ENCODE measurements at regions of chr14 and their contacts with region 1.

Region 1: DNA sequence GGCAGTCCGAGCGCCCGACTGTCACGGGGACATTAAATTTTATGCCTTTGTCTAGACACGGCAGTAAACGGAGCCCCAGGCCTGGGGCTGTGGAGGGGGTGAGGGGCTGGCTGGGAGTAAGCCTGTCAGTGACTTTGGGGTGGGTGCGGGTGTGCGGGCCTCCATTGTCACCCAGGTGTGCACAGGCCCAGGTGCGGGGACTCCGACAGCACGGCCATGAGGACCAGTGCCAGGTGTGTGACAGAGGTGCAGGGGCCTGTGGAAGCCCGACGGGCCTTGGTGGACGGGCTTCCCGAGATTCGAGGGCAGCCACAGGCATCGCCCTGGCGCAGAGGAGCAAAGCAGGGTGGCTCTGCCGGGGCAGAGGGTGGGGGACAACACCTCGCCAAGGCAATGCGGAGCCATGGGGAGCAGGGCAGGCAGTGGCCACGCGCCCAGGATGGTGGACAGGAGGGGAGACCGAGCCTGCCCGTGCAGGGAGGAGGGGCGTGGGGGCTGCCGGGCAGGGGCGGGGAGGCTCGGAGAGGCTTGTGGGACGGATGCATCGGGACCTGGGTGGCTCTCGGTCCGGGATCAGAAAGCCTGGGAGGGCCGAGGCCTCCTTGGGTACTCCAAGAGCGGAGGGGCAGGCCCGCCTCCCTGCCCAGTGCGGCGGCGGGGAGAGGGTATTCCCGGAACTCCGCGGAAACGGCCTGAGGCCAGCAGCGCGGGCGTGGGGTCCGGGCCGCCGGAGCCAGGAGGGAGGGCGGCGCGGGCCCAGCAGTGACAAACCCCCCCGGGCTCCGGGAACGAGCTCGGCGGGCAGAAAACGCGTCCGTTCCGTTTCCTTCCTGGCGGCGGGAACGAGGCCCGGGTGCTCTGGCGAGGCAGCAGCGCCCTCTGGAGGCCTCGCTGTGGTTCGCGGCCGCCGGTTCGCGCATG is 1.5 kb downstream of the TMEM121 start:
- DNase-seq: peak; percentile 80 to 85
- ATAC-seq: peak; percentile 66 to 84 (median 75)
- H3K4me3 ChIP-seq: peak overlapping the region; percentile 29 to 83 (median 69)
- H3K27ac ChIP-seq: peak overlapping the region in 9 of 10 donors; percentile 30 to 83 (median 71)
- H3K4me1 ChIP-seq: peaks cover 11 to 38% (median 30%) of the 10 kb centered on the region in 9 donors
- H3K27me3 ChIP-seq: peaks cover 0 to 62% (median 0%) of the 10 kb centered on the region in 7 donors
- CTCF ChIP-seq: peak; percentile 72 to 95 (median 90)

Region 2: DNA sequence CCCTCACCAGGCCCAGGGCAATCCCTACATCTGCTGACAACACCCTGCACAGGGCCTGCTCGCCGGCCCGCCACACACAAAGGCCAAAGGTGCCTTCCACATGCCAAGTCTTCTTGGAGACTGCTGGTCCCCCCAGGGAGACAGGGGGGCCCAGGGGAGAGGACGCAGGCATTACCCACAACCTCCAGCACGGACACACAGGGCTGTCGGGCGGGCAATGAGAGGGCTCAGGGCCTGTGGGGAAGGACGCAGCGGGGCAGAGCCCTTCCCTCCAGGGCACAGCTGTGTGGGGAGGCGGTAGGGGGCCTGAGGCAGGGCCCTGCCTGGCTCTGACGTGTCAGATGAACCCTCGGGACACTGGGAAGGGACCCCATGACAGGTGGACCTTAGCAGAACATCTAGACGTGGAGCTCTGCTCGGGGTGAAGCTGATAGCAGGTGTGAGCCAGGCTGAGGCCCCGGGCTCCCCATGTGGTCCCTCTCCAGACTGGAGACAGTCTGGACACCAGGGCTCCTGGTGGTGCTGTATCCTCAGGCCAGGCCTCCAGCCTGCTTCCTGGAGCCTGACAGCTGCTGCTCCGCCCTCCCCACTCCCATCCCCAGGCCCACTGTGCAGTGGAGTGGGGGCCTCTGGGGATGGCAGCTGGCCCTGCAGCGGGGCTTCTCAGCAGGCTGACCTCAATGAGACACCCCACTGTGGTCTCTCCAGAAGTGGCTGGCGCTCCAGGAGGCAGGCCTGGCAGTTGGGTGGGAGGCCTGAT is 315.2 kb before region 1 on chr14:
- intact Hi-C with region 1: loop called in 1 of 10 experiments (anchors 1 kb)
- DNase-seq: no peak
- ATAC-seq: no peak
- H3K4me3 ChIP-seq: no peak overlapping the region
- H3K27ac ChIP-seq: no peak overlapping the region
- H3K4me1 ChIP-seq: peaks cover 0 to 2% (median 0%) of the 10 kb centered on the region in 9 donors
- H3K27me3 ChIP-seq: no peaks in the 10 kb centered on the region
- CTCF ChIP-seq: no peak

Region 3: GRCh38 chr14:105366386-105367074 is 161.4 kb before region 1 on chr14:
- intact Hi-C with region 1: loop called in 9 of 10 experiments (anchors 2 to 10 kb)
- DNase-seq: no peak
- ATAC-seq: no peak
- H3K4me3 ChIP-seq: no peak overlapping the region
- H3K27ac ChIP-seq: no peak overlapping the region
- H3K4me1 ChIP-seq: peaks cover 0 to 12% (median 0%) of the 10 kb centered on the region in 9 donors
- H3K27me3 ChIP-seq: no peaks in the 10 kb centered on the region
- CTCF ChIP-seq: no peak

Region 4: GRCh38 chr14:105375635-105376057 is 152.3 kb before region 1 on chr14:
- intact Hi-C with region 1: loop called in 8 of 10 experiments (anchors 2 to 10 kb)
- DNase-seq: no peak
- ATAC-seq: no peak
- H3K4me3 ChIP-seq: no peak overlapping the region
- H3K27ac ChIP-seq: no peak overlapping the region
- H3K4me1 ChIP-seq: peaks cover 0 to 11% (median 0%) of the 10 kb centered on the region in 9 donors
- H3K27me3 ChIP-seq: no peaks in the 10 kb centered on the region
- CTCF ChIP-seq: no peak

Region 5: GRCh38 chr14:105448706-105449111 is 79.2 kb before region 1 on chr14:
- intact Hi-C with region 1: loop called in 3 of 10 experiments (anchors 5 to 10 kb)
- DNase-seq: peak; percentile 79 to 84
- ATAC-seq: peak; percentile 86 to 95 (median 93)
- H3K4me3 ChIP-seq: peak overlapping the region in 3 of 10 donors; percentile 3 to 12 (median 8)
- H3K27ac ChIP-seq: peak overlapping the region in 8 of 10 donors; percentile 6 to 71 (median 36)
- H3K4me1 ChIP-seq: peaks cover 11 to 34% (median 18%) of the 10 kb centered on the region in 9 donors
- H3K27me3 ChIP-seq: no peaks in the 10 kb centered on the region
- CTCF ChIP-seq: peak; percentile 95 to 98 (median 97)

Region 6: GRCh38 chr14:105490572-105491366 is 37.2 kb before region 1 on chr14 and contains the start of gene TEDC1:
- intact Hi-C with region 1: loop called in 2 of 10 experiments (anchors 5 kb)
- DNase-seq: peak; percentile 99 to 100
- ATAC-seq: peak; percentile 75 to 90 (median 84)
- H3K4me3 ChIP-seq: peak within 1 kb of the TSS; percentile 58 to 89 (median 72)
- H3K27ac ChIP-seq: peak within 1 kb of the TSS; percentile 86 to 100 (median 96)
- H3K4me1 ChIP-seq: peaks cover 31 to 70% (median 56%) of the 10 kb centered on the region in 9 donors
- H3K27me3 ChIP-seq: peaks cover 0 to 20% (median 0%) of the 10 kb centered on the region in 7 donors
- CTCF ChIP-seq: peak; percentile 66 to 94 (median 83)
- total RNA-seq, gene TEDC1: 2.3 to 5.2 (median 4.2) TPM